ENCODE measurements at regions of chr21 and their contacts with region 1.

Region 1: GRCh38 chr21:42209819-42210479 is 9.0 kb upstream of the ABCG1 start:
- DNase-seq: peak; percentile 61
- H3K4me3 ChIP-seq: no peak overlapping the region
- H3K27ac ChIP-seq: peak overlapping the region; percentile 77
- H3K4me1 ChIP-seq: peaks cover 16% of the 10 kb centered on the region
- H3K27me3 ChIP-seq: no peaks in the 10 kb centered on the region
- CTCF ChIP-seq: no peak
- POLR2A ChIP-seq: peak; percentile 39

Region 2: DNA sequence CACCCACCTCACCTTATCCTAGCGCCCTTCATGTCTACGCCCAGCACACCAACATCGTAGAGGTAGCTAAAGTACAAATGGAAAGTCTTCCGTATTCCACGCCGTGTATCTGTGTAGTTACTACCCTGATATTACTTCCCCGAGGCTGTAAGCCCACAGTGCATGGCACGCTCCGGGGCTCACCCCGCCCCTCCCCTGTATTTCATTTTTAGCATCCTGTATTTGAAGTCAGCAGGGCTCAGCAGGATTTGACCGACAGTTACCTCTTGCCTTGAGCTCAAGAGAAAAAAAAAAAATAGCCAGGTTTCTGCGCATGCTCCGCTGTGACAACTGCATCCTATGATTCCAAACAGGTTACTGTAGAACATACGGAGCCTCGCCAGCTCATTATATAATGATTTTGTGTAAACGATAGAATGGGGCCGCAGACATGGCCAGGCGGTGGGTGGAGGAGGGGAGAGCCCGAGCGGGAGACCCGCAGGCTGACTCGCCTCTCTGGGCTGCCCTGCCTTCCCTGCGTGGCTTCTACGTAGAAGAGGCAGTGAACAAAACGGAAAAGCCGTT is 10.3 kb after region 1 on chr21:
- CTCF ChIA-PET with region 1: interaction called, 9 read pairs
- POLR2A ChIA-PET with region 1: no interaction called
- dilution Hi-C with region 1: no loop called
- intact Hi-C with region 1: loop called (anchors 1 kb)
- DNase-seq: peak; percentile 91
- H3K4me3 ChIP-seq: peak overlapping the region; percentile 53 to 65 (median 63)
- H3K27ac ChIP-seq: peak overlapping the region; percentile 53
- H3K4me1 ChIP-seq: peaks cover 24% of the 10 kb centered on the region
- H3K27me3 ChIP-seq: peaks cover 2 to 6% of the 10 kb centered on the region in 2 experiments
- CTCF ChIP-seq: no peak
- POLR2A ChIP-seq: no peak